Activated T-helper 2 cell treated with anti-CD3 and anti-CD28 coated beads, Interferon-gamma antibody, Interleukin-2, Interleukin-4, amounts not matched to agents 10 μg/mL and 5 μg/mL and 100 μg/mL, durations not matched to agents 14 hours and 24 hours and 36 hours (primary cell): ENCODE measurements at regions of chr19 and their contacts with region 1.

Region 1: GRCh38 chr19:13430790-13431582 is 75.3 kb downstream of the CACNA1A start:
- DNase-seq: peak; percentile 26
- H3K4me3 Mint-ChIP-seq: no peak overlapping the region
- H3K27ac Mint-ChIP-seq: no peak overlapping the region
- H3K4me1 Mint-ChIP-seq: no peaks in the 10 kb centered on the region
- H3K27me3 Mint-ChIP-seq: no peaks in the 10 kb centered on the region

Region 2: GRCh38 chr19:12696366-12697335 is 734.3 kb before region 1 on chr19 and contains the start of gene FBXW9:
- intact Hi-C with region 1: no loop called
- DNase-seq: peak; percentile 94
- H3K4me3 Mint-ChIP-seq: peak within 1 kb of the TSS; percentile 89
- H3K27ac Mint-ChIP-seq: peak within 1 kb of the TSS; percentile 95
- H3K4me1 Mint-ChIP-seq: peaks cover 3% of the 10 kb centered on the region
- H3K27me3 Mint-ChIP-seq: no peaks in the 10 kb centered on the region
- total RNA-seq, gene FBXW9: 8.8 and 9.4 TPM in 2 replicates

Region 3: GRCh38 chr19:13277104-13277809 is 153.7 kb before region 1 on chr19:
- intact Hi-C with region 1: loop called (anchors 1 kb)
- DNase-seq: peak; percentile 61
- H3K4me3 Mint-ChIP-seq: no peak overlapping the region
- H3K27ac Mint-ChIP-seq: peak overlapping the region; percentile 73
- H3K4me1 Mint-ChIP-seq: peaks cover 14% of the 10 kb centered on the region
- H3K27me3 Mint-ChIP-seq: peaks cover 1% of the 10 kb centered on the region